Heart left ventricle (tissue), 16 donors: ENCODE measurements at regions of chr2 and their contacts with region 1.

Region 1: GRCh38 chr2:197480165-197481036 is 19.2 kb downstream of the HSPD1 start:
- DNase-seq: no peak
- ATAC-seq: peak in 2 of 4 donors; percentile 15 to 27
- H3K4me3 ChIP-seq: no peak overlapping the region
- H3K27ac ChIP-seq: no peak overlapping the region
- H3K4me1 ChIP-seq: peaks cover 0 to 12% (median 0%) of the 10 kb centered on the region in 12 donors
- H3K27me3 ChIP-seq: no peaks in the 10 kb centered on the region
- CTCF ChIP-seq: no peak
- POLR2A ChIP-seq: no peak

Region 2: GRCh38 chr2:197399887-197400540 is 80.4 kb before region 1 on chr2:
- intact Hi-C with region 1: loop called in 2 of 10 experiments (anchors 5 to 10 kb)
- DNase-seq: no peak
- ATAC-seq: no peak
- H3K4me3 ChIP-seq: no peak overlapping the region
- H3K27ac ChIP-seq: no peak overlapping the region
- H3K4me1 ChIP-seq: no peaks in the 10 kb centered on the region
- H3K27me3 ChIP-seq: no peaks in the 10 kb centered on the region
- CTCF ChIP-seq: no peak
- POLR2A ChIP-seq: no peak

Region 3: GRCh38 chr2:197405582-197405981 is 74.8 kb before region 1 on chr2:
- intact Hi-C with region 1: loop called in 2 of 10 experiments (anchors 5 to 10 kb)
- DNase-seq: no peak
- ATAC-seq: no peak
- H3K4me3 ChIP-seq: no peak overlapping the region
- H3K27ac ChIP-seq: no peak overlapping the region
- H3K4me1 ChIP-seq: no peaks in the 10 kb centered on the region
- H3K27me3 ChIP-seq: no peaks in the 10 kb centered on the region
- CTCF ChIP-seq: no peak
- POLR2A ChIP-seq: no peak

Region 4: DNA sequence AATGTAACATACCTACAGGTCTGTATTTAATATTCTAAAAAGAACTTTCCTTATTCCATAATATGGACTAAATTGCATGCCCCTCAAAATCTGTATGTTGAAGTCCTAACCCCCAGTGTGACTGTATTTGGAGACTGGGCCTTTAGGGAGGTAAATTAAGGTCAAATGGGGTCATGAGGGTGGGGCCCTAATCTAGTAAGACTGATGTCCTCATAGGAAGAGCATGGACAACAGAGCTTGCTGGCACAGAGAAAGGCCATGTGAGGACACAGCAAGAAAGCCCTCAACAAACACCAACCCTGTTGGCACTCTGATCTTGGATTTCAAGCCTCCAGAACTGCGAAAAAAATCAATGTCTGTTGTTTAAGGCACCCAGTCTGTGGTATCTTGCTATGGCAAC is 64.1 kb before region 1 on chr2:
- intact Hi-C with region 1: loop called in 1 of 10 experiments (anchors 10 kb)
- DNase-seq: no peak
- ATAC-seq: no peak
- H3K4me3 ChIP-seq: no peak overlapping the region
- H3K27ac ChIP-seq: no peak overlapping the region
- H3K4me1 ChIP-seq: peaks cover 0 to 12% (median 2%) of the 10 kb centered on the region in 12 donors
- H3K27me3 ChIP-seq: no peaks in the 10 kb centered on the region
- CTCF ChIP-seq: no peak
- POLR2A ChIP-seq: no peak